ENCODE measurements at regions of chr5 and their contacts with region 1.

Region 1: DNA sequence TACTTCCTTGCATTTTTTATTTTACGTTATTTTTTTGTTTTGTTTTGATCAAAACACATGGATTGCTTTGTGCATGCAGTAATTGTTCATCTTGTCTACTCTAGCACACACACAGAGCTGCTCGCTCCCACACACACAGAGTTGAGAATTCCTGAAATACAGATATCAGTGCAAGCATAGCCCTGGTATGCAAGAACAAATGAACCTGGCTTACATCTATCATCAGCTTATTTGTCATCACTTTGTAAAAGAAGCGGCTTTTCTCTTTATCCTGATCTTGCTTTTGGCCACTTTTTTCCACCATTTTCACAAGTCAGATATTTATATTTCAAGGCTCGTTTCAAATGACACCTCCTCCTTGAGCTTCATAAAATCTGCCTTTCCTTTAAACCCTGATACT is 1435.7 kb downstream of the MAT2B start:
- DNase-seq: no peak
- H3K4me3 ChIP-seq: no peak overlapping the region
- H3K27ac ChIP-seq: no peak overlapping the region
- H3K4me1 ChIP-seq: no peaks in the 10 kb centered on the region
- H3K27me3 ChIP-seq: no peaks in the 10 kb centered on the region
- CTCF ChIP-seq: no peak
- POLR2A ChIP-seq: no peak

Region 2: GRCh38 chr5:163033646-163034045 is 1907.5 kb before region 1 on chr5:
- CTCF ChIA-PET with region 1: no interaction called
- POLR2A ChIA-PET with region 1: no interaction called
- dilution Hi-C with region 1: no loop called
- intact Hi-C with region 1: loop called (anchors 5 kb)
- DNase-seq: no peak
- H3K4me3 ChIP-seq: no peak overlapping the region
- H3K27ac ChIP-seq: no peak overlapping the region
- H3K4me1 ChIP-seq: no peaks in the 10 kb centered on the region
- H3K27me3 ChIP-seq: no peaks in the 10 kb centered on the region
- CTCF ChIP-seq: no peak
- POLR2A ChIP-seq: no peak